Activated CD4-positive, alpha-beta T cell treated with anti-CD3 and anti-CD28 coated beads, Interleukin-2, amount 10 ng/mL, durations not matched to agents 24 days and 14 days (primary cell): ENCODE measurements at regions of chr16 and their contacts with region 1.

Region 1: GRCh38 chr16:67935402-67936123 is 1.1 kb downstream of the PSMB10 start:
- DNase-seq: peak; percentile 98
- H3K4me3 Mint-ChIP-seq: peak overlapping the region; percentile 100
- H3K27ac Mint-ChIP-seq: peak overlapping the region; percentile 92
- H3K4me1 Mint-ChIP-seq: peaks cover 33% of the 10 kb centered on the region
- H3K27me3 Mint-ChIP-seq: no peaks in the 10 kb centered on the region

Region 2: GRCh38 chr16:67521095-67521804 is 414.3 kb before region 1 on chr16:
- intact Hi-C with region 1: loop called (anchors 5 kb)
- DNase-seq: peak; percentile 99
- H3K4me3 Mint-ChIP-seq: peak overlapping the region; percentile 89
- H3K27ac Mint-ChIP-seq: peak overlapping the region; percentile 100
- H3K4me1 Mint-ChIP-seq: peaks cover 30% of the 10 kb centered on the region
- H3K27me3 Mint-ChIP-seq: peaks cover 18% of the 10 kb centered on the region

Region 3: DNA sequence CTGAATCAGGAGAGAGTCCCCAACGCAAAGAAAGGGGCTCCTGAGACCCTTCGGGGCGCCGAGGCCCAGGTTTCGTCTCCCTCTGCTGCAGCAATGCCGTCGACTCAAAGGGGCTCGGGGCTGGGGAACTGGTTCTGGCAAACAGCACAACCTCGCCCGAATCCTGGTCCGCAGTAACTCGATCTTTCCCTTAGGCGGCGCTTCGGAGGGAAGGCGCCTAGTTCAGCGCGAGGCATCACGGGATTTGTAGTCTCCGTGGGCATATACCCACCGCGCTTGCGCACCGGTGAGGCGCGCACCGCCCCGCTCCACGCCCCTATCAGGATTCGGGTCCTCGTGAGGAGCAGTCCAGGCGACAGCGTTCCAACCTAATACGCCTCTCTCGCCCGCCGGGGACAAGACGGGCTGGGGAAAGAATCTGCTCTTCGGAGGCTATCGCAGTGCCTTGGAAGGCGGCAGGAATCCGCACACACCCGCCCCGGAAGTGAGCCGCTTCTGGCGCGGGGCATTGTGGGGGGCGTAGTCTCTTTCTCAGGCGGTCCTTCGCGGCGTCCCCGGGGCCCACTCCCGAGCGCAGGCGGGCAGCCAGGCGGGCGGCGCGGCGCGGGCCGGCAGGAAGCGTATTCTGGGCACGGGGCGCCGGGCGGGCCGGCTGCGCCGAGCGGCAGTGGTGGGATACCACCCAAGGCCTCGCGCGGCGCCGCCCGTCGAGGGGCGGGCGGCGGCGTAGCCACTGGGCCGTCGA is 93.6 kb before region 1 on chr16 and contains the start of gene THAP11:
- intact Hi-C with region 1: loop called (anchors 1 kb)
- DNase-seq: peak; percentile 99
- H3K4me3 Mint-ChIP-seq: peak within 1 kb of the TSS; percentile 93
- H3K27ac Mint-ChIP-seq: peak within 1 kb of the TSS; percentile 94
- H3K4me1 Mint-ChIP-seq: peaks cover 26% of the 10 kb centered on the region
- H3K27me3 Mint-ChIP-seq: no peaks in the 10 kb centered on the region
- total RNA-seq, gene THAP11: 46.4 and 48.7 TPM in 2 replicates

Region 4: GRCh38 chr16:67892899-67893742 is 42.4 kb before region 1 on chr16 and contains the start of gene PSKH1:
- intact Hi-C with region 1: loop called (anchors 1 kb)
- DNase-seq: peak; percentile 97
- H3K4me3 Mint-ChIP-seq: peak within 1 kb of the TSS; percentile 97
- H3K27ac Mint-ChIP-seq: peak within 1 kb of the TSS; percentile 94
- H3K4me1 Mint-ChIP-seq: peaks cover 22% of the 10 kb centered on the region
- H3K27me3 Mint-ChIP-seq: no peaks in the 10 kb centered on the region
- total RNA-seq, gene PSKH1: 14.4 and 16.3 TPM in 2 replicates

Region 5: GRCh38 chr16:67907397-67908180 is 28.0 kb before region 1 on chr16:
- intact Hi-C with region 1: no loop called
- DNase-seq: no peak
- H3K4me3 Mint-ChIP-seq: no peak overlapping the region
- H3K27ac Mint-ChIP-seq: peak overlapping the region; percentile 83
- H3K4me1 Mint-ChIP-seq: peaks cover 14% of the 10 kb centered on the region
- H3K27me3 Mint-ChIP-seq: no peaks in the 10 kb centered on the region

Region 6: DNA sequence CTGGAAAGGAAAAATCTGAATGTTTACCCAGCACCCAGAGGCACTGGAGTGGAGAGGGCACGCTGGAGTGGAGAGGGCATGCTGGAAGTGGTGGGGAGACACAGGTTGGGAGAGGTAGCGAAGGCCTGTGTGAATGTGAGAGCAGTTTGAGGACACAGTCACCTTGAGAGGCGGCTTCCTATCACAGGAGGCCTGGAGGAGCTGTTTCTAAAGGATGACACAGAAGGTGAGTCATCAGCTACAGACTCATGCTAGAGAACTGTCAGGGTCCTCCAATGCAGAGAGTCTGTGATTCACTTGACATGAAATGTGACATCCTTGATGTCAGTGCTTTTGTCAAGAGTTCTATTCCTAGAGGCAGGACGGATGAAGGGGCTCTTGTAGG is 17.7 kb before region 1 on chr16:
- intact Hi-C with region 1: no loop called
- DNase-seq: peak; percentile 74
- H3K4me3 Mint-ChIP-seq: no peak overlapping the region
- H3K27ac Mint-ChIP-seq: peak overlapping the region; percentile 90
- H3K4me1 Mint-ChIP-seq: peaks cover 26% of the 10 kb centered on the region
- H3K27me3 Mint-ChIP-seq: no peaks in the 10 kb centered on the region

Region 7: GRCh38 chr16:67959520-67959919 is 24.0 kb after region 1 on chr16:
- intact Hi-C with region 1: no loop called
- DNase-seq: no peak
- H3K4me3 Mint-ChIP-seq: no peak overlapping the region
- H3K27ac Mint-ChIP-seq: no peak overlapping the region
- H3K4me1 Mint-ChIP-seq: peaks cover 5% of the 10 kb centered on the region
- H3K27me3 Mint-ChIP-seq: no peaks in the 10 kb centered on the region

Region 8: DNA sequence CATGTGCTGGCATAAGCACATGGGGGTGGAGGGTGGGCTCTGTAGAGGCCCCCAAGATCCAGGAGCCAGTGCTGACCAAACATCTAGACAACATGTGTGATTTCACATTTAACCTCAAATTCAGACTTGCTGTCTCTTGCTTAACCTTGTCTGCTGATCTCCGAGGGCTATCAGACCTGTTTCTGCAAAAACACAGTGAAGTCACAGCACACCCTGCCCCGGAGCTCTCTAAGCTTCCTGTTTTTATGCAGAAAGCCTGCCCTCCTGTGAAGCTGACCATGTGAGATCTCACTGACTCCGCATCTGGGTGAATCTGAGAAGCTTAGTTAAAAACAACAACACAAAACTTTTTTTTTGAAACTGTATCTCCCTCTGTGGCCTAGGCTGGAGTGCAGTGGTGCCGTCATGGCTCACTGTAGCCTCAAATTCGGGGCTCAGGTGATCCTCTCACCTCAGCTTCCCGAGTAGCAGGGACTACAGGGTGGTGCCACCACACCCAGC is 70.3 kb after region 1 on chr16:
- intact Hi-C with region 1: no loop called
- DNase-seq: peak; percentile 84
- H3K4me3 Mint-ChIP-seq: peak overlapping the region; percentile 25
- H3K27ac Mint-ChIP-seq: peak overlapping the region; percentile 92
- H3K4me1 Mint-ChIP-seq: peaks cover 15% of the 10 kb centered on the region
- H3K27me3 Mint-ChIP-seq: no peaks in the 10 kb centered on the region

Region 9: DNA sequence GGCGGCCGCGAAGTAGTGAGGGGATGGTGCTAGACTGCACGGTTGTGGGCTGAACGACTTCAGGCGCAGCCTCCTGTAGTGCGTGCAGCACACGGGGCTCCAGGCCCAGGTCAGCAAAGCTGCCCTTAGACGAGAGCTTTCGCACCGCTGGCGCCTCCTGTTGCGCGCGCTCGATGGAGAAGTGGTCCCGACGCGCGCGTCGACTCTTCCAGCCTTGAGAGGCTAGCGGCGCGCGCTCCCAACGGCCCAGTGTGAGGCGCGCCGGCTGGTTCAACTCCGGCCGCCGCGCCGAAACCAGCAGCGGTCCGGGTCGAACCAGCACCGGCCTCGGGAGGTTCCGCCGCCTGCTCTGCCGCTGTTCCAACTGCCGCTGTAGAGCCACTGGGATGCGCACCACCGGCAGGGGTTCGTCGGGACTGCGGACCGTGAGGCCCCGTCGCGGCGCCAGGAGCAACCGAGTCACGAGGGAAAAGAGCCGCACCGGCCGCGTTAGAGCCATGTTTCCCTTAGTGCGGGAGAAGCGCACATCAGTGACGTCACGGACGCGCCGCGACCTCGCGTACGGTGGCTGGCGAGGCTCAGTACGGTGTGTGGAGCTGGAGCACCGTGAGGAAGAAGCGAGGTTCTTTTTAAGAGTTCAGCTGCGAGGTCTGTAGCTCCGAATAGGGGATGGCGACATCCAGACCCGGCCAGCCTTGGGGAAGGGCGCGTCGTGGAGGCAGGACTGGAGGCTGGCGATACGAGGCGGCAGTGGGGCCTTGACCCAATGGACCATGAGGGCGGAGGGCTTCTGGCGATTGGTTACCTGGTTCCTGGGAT is 87.3 kb after region 1 on chr16 and contains the starts of genes DDX28 and DUS2:
- intact Hi-C with region 1: loop called (anchors 5 kb)
- DNase-seq: peak; percentile 99
- H3K4me3 Mint-ChIP-seq: peak within 1 kb of the TSS; percentile 95
- H3K27ac Mint-ChIP-seq: peak within 1 kb of the TSS; percentile 96
- H3K4me1 Mint-ChIP-seq: peaks cover 22% of the 10 kb centered on the region
- H3K27me3 Mint-ChIP-seq: no peaks in the 10 kb centered on the region
- total RNA-seq, gene DDX28: 23.9 and 26.1 TPM in 2 replicates
- total RNA-seq, gene DUS2: 35.3 and 42.6 TPM in 2 replicates